HepG2 (cell line): ENCODE measurements at regions of chr17 and their contacts with region 1.

Region 1: DNA sequence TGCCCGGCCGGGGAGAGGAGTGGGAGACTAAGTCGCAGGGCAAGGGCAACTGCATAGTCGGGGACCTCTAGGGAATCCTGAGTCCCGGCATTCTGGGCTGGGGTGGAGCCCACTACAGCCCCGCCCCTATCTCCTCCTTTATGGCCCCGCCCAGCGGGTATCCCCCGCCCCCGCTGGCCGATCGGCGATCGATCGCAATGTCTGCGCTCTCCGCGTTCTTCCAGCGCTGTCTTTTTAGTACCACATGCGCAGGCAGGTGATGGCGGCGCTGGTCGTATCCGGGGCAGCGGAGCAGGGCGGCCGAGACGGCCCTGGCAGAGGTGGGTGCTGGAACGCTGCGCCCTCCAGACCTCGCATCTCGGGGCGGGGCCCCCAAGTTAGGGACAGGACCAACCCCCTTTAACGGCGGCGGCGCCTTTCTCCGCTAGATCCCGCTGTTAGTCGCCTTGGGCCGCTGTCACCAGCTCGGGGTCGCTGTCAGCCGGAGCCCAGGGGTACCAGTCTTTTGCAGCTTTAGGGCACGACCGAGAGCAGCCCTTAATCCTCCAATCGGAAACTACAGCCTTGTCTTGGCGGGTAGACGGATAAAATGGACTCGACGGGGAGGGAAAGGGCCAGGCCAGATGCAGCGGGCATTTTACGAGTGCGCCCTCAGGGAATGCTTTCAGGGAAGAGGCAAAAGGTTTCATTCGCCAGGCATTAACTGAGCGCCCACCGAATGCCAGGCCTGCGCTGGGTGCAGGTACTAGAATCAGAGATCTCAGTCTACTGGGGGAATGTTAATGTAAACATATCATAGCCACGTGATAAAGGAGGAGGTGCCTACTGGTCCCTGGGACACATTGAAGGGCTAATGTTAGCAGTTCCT is at the start of gene DPH1:
- DNase-seq: peak; percentile 92
- ATAC-seq: peak; percentile 94
- H3K4me3 ChIP-seq: peak within 1 kb of the TSS; percentile 89 to 98 (median 96)
- H3K27ac ChIP-seq: peak within 1 kb of the TSS; percentile 52
- H3K4me1 ChIP-seq: peaks cover 32% of the 10 kb centered on the region
- H3K27me3 ChIP-seq: peaks cover 0 to 24% of the 10 kb centered on the region in 2 experiments; a peak in 2 of 5 replicates
- CTCF ChIP-seq: peak; percentile 35
- EP300 ChIP-seq: 0 out of 4 replicates have a peak, but pooled peaks of 1 of the 2 experiments have one; percentile 23
- POLR2A ChIP-seq: peak; percentile 68 to 73
- RAD21 ChIP-seq: 0 out of 2 replicates have a peak, but pooled peaks have one; percentile 22
- total RNA-seq, gene DPH1: 14.5 and 25.3 TPM in 2 replicates

Region 2: DNA sequence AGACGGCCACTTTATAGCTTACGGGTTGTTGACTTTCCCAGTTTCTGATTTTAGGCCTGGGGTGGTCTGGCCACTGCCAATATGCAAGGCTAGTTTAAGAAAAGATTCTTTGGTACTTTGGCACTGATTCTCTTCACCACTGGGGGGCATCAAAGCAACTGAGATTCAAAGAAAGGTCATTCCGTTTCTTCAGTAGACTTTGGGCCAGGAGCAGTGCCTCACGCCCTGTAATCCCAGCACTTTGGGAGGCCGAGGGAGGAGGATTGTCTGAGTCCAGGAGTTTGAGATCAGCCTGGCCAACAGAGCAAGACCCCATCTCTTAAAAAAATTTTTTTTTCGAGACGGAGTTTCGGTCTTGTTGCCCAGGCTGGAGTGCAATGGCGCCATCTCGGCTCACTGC is 147.3 kb before region 1 on chr17:
- CTCF ChIA-PET with region 1: interaction called, 6 read pairs
- POLR2A ChIA-PET with region 1: no interaction called
- in situ Hi-C with region 1: no loop called
- intact Hi-C with region 1: loop called (anchors 10 kb)
- DNase-seq: peak; percentile 33
- ATAC-seq: no peak
- H3K4me3 ChIP-seq: no peak overlapping the region
- H3K27ac ChIP-seq: no peak overlapping the region
- H3K4me1 ChIP-seq: no peaks in the 10 kb centered on the region
- H3K27me3 ChIP-seq: no peaks in the 10 kb centered on the region
- CTCF ChIP-seq: peak; percentile 76
- EP300 ChIP-seq: no peak
- POLR2A ChIP-seq: no peak
- RAD21 ChIP-seq: peak; percentile 59; the same call in 1 of the 2 replicates

Region 3: DNA sequence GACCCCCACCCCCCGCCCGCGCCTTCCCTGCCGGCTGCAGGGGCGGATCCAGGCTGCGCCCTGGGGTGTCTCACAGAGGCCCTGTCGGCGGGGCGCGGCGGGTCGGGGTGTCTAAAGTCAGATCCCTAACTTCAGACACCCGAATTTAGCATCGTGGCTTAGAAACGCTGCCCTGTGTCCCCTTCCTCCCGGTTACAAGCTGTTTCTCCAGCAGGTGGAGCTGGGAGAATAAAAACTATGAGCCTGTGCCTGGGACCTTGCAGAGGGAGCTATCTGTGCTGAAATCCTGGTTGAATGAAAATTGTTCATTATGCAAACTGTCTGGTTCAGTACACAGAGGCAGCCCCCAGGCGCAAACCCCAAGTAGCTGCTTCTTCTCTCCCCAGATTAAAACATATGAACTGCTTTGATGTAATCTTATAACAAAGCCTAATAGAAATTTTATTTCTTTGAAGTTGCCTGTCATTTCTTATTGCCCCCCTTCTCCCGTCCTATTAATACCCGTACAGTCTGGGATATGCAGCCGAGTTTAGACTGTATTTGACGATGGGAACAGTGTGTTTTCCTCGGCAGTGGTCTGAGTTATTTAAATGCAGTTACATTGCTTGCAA is 121.3 kb before region 1 on chr17:
- CTCF ChIA-PET with region 1: interaction called, 31 read pairs
- POLR2A ChIA-PET with region 1: interaction called, 18 read pairs
- in situ Hi-C with region 1: loop called (anchors 5 kb)
- intact Hi-C with region 1: loop called (anchors 1 kb)
- DNase-seq: peak; percentile 72
- ATAC-seq: peak; percentile 79
- H3K4me3 ChIP-seq: no peak overlapping the region
- H3K27ac ChIP-seq: no peak overlapping the region
- H3K4me1 ChIP-seq: peaks cover 42% of the 10 kb centered on the region
- H3K27me3 ChIP-seq: peaks cover 1 to 47% of the 10 kb centered on the region in 2 experiments; a peak in 4 of 5 replicates
- CTCF ChIP-seq: peak; percentile 89
- EP300 ChIP-seq: no peak
- POLR2A ChIP-seq: no peak
- RAD21 ChIP-seq: peak; percentile 83

Region 4: GRCh38 chr17:1972487-1973160 is 57.5 kb before region 1 on chr17:
- CTCF ChIA-PET with region 1: no interaction called
- POLR2A ChIA-PET with region 1: no interaction called
- in situ Hi-C with region 1: no loop called
- intact Hi-C with region 1: loop called (anchors 10 kb)
- DNase-seq: no peak
- ATAC-seq: peak; percentile 21; the same call in 2 of the 3 replicates
- H3K4me3 ChIP-seq: no peak overlapping the region
- H3K27ac ChIP-seq: no peak overlapping the region
- H3K4me1 ChIP-seq: peaks cover 57% of the 10 kb centered on the region
- H3K27me3 ChIP-seq: peaks cover 1 to 29% of the 10 kb centered on the region in 2 experiments; a peak in 4 of 5 replicates
- CTCF ChIP-seq: 0 out of 2 replicates have a peak, but pooled peaks have one; percentile 6
- EP300 ChIP-seq: no peak
- POLR2A ChIP-seq: no peak
- RAD21 ChIP-seq: no peak

Region 5: GRCh38 chr17:1997927-1998784 is 32.0 kb before region 1 on chr17:
- CTCF ChIA-PET with region 1: no interaction called
- POLR2A ChIA-PET with region 1: interaction called, 18 read pairs
- in situ Hi-C with region 1: no loop called
- intact Hi-C with region 1: no loop called
- DNase-seq: peak; percentile 77
- ATAC-seq: peak; percentile 70
- H3K4me3 ChIP-seq: peak overlapping the region; percentile 38 to 66 (median 60); a peak in 5 of 6 replicates
- H3K27ac ChIP-seq: peak overlapping the region; percentile 70
- H3K4me1 ChIP-seq: peaks cover 52% of the 10 kb centered on the region
- H3K27me3 ChIP-seq: peaks cover 0 to 6% of the 10 kb centered on the region in 2 experiments; a peak in 2 of 5 replicates
- CTCF ChIP-seq: no peak
- EP300 ChIP-seq: peak in 1 of 2 experiments; percentile 74; a peak in 2 of 4 replicates
- POLR2A ChIP-seq: no peak
- RAD21 ChIP-seq: peak; percentile 62